Pancreas (tissue), 10 donors: ENCODE measurements at regions of chr17 and their contacts with region 1.

Region 1: GRCh38 chr17:72725433-72726068 is 366.9 kb downstream of the SLC39A11 start:
- DNase-seq: peak; percentile 26 to 82 (median 52)
- ATAC-seq: peak; percentile 79 to 89 (median 83)
- H3K4me3 ChIP-seq: no peak overlapping the region
- H3K27ac ChIP-seq: no peak overlapping the region
- H3K4me1 ChIP-seq: no peaks in the 10 kb centered on the region
- H3K27me3 ChIP-seq: no peaks in the 10 kb centered on the region
- CTCF ChIP-seq: peak; percentile 62 to 79 (median 74)

Region 2: DNA sequence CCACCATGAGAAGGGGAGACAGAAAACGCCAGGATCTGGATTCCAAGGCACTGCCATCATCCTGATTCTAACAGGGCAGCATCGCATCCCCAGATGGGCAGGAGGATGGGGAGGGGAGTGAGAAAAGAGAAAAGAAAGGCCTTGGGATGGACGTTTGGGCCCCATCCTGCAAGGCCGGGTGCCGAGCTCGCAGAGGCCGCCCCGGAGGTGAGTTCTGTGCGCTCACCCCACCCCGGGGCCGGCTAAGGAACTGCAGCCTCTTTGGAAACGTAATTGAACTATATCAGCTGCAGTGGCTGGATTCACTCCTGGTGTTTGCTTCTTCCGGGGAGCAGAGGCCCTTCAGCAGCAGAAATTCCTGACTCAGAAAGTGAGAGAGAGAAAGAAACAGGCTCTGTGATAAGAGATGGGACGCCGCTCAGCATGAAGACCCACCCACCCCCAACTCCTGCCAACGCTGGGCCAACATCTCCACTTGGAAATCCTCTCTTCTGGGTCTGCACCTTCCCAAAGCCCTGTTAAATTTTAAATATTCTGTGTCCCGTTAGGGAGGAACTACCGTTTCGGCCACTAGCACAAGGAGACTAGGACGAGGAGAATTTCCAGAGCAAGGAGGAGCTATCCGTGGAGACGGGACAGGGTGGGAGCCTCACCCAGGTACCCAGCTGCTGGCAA is 430.8 kb after region 1 on chr17:
- intact Hi-C with region 1: loop called in 1 of 3 experiments (anchors 5 kb)
- DNase-seq: peak; percentile 63 to 89 (median 76)
- ATAC-seq: peak; percentile 88 to 96 (median 94)
- H3K4me3 ChIP-seq: no peak overlapping the region
- H3K27ac ChIP-seq: no peak overlapping the region
- H3K4me1 ChIP-seq: peaks cover 0 to 6% (median 0%) of the 10 kb centered on the region in 3 donors
- H3K27me3 ChIP-seq: no peaks in the 10 kb centered on the region
- CTCF ChIP-seq: peak; percentile 56 to 79 (median 78)

Region 3: DNA sequence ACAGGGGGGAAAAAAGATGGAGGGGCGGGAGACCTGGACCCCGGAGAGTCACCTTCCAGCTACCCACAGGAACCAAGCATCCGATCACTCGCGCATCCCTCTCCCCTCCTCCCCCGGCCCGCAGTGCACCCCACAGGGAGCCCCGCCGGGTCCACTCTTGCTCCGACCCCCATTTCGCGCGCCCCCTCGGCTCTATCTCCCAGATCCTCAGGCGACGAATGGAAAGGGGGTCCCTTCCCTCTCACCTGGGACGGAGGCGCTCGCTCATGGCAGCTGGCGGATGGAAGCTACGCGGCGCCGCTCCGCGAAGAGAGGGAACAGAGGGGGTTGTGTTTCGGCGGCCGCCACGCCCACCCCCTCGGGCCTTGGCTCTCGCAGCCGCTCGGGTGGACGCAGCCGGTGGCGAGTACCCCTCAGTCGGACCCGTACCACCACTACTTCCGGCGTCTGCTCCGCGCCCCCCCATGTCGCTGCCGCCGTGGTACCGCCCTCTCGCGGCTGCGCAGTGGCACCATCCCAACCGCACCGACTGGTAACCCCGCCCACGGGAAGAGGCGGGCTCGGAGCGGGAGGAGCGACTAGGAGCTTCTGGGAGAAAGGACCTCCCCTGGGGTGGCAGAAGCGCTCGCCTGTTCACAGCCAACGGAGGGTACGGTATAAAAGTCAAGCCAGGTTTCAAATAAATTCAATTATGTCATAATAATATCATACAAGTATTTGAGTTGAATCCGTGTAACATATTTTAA is 506.5 kb after region 1 on chr17:
- intact Hi-C with region 1: loop called in 1 of 3 experiments (anchors 10 kb)
- DNase-seq: peak; percentile 93 to 99 (median 96)
- ATAC-seq: peak; percentile 93 to 97 (median 94)
- H3K4me3 ChIP-seq: peak overlapping the region; percentile 98 to 100 (median 99)
- H3K27ac ChIP-seq: peak overlapping the region; percentile 71 to 84 (median 81)
- H3K4me1 ChIP-seq: peaks cover 16 to 39% (median 38%) of the 10 kb centered on the region in 3 donors
- H3K27me3 ChIP-seq: no peaks in the 10 kb centered on the region
- CTCF ChIP-seq: peak in 3 of 4 donors; percentile 11 to 42 (median 41)

Region 4: DNA sequence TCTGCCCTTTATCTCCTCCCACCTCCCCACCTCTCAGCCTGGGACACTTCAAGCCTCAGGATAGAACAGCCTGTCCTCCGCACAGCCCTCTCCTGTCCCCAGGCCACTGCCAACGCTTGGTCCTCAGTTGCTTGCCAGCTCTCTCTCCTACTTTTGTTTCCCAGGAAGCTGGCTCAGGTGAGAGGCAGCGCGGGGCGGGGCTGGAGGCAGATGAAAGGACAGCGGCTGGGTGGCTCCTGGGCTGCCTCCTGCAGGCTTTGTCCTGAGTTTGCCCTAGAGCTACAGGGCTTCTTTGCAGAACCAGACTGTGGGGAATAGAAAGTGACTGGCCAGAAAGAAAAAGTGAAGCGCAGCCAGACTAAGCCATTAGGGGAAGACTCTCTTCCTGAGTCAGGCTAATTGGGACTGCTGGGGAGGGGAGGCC is 634.4 kb after region 1 on chr17:
- intact Hi-C with region 1: loop called in 1 of 3 experiments (anchors 10 kb)
- DNase-seq: peak; percentile 80 to 94 (median 86)
- ATAC-seq: peak; percentile 81 to 92 (median 89)
- H3K4me3 ChIP-seq: no peak overlapping the region
- H3K27ac ChIP-seq: peak overlapping the region; percentile 16 to 67 (median 42)
- H3K4me1 ChIP-seq: peaks cover 0 to 9% (median 0%) of the 10 kb centered on the region in 3 donors
- H3K27me3 ChIP-seq: no peaks in the 10 kb centered on the region
- CTCF ChIP-seq: peak in 1 of 4 donors; percentile 11